ENCODE measurements at regions of chr3 and their contacts with region 1.

Region 1: DNA sequence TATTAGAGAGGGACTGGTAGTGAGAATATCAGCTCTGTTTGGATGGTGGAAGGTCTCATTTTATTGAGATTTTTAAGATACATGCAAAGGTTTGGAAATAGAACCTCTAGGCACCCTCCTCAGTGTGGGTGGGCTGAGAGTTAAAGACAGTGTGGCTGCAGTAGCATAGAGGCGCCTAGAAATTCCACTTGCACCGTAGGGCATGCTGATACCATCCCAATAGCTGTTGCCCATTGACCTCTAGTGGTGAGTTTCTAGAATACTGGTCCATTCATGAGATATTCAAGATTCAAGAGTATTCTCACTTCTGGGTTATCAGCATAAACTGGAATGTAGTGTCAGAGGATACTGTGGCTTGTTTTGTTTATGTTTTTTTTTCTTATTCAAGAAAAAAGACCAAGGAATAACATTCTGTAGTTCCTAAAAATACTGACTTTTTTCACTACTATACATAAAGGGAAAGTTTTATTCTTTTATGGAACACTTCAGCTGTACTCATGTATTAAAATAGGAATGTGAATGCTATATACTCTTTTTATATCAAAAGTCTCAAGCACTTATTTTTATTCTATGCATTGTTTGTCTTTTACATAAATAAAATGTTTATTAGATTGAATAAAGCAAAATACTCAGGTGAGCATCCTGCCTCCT is 87.2 kb downstream of the TGFBR2 start:
- DNase-seq: peak; percentile 48
- CTCF ChIP-seq: peak; percentile 57

Region 2: DNA sequence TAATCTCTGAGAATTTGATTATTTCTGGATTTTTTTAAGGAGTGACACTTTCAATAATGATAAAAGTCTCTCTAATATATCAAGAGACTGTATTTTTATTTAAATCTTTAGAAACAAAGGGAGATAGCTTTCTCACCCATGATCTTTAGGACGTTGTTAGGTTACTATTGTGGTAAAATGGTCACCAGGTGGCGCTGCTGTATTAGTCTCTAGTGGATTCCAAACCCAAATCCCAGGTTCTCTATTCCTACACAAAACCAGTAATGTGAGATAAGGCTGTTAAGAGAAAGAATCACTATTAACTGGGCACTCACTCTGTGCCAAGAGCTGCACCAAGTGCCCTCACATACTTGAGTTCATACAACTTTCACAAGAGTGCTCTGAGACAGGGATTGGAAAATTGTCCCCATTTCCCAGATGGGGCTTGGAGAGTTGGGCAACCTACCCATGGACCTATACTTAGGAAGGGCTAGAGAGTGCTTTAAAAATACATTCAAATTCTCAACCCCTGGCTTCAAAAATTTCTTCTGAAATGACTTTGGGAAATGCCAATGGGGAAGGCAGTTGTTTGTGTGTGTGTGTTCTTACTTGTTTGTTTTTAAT is 680.6 kb before region 1 on chr3:
- CTCF ChIA-PET with region 1: interaction called, 28 read pairs
- POLR2A ChIA-PET with region 1: no interaction called
- DNase-seq: peak; percentile 18
- CTCF ChIP-seq: peak; percentile 60

Region 3: GRCh38 chr3:30042274-30042859 is 651.2 kb before region 1 on chr3:
- CTCF ChIA-PET with region 1: interaction called, 40 read pairs
- POLR2A ChIA-PET with region 1: no interaction called
- DNase-seq: peak; percentile 24
- CTCF ChIP-seq: peak; percentile 48

Region 4: DNA sequence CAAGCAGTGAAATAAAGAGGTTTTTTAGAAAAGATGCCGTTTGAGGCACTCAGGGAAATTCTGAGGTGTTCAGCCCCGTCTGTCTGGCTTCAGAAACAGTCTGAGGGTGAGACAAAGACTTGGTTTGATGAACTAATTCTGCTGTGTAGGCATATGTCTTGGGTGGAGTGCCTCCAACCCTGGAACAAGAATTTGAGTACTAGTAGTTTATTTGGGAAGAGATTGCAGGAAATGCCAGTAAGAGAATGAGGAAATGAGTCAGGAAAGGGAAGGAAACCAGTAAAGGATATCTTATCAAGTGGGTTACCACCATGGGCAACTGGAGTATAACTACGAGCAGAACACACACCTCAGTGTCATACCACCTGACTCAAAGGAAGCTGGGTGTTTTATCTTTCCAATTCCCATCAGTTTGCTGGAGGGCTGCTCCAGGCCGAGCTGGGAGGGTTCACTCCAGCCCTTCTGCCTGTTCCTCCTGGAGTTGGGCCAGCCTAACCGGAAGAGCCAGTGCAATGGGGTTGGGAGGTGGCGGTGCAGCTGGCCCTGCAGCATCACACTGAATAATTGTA is 11.9 kb before region 1 on chr3:
- CTCF ChIA-PET with region 1: interaction called, 19 read pairs
- POLR2A ChIA-PET with region 1: no interaction called
- DNase-seq: no peak
- CTCF ChIP-seq: no peak

Region 5: DNA sequence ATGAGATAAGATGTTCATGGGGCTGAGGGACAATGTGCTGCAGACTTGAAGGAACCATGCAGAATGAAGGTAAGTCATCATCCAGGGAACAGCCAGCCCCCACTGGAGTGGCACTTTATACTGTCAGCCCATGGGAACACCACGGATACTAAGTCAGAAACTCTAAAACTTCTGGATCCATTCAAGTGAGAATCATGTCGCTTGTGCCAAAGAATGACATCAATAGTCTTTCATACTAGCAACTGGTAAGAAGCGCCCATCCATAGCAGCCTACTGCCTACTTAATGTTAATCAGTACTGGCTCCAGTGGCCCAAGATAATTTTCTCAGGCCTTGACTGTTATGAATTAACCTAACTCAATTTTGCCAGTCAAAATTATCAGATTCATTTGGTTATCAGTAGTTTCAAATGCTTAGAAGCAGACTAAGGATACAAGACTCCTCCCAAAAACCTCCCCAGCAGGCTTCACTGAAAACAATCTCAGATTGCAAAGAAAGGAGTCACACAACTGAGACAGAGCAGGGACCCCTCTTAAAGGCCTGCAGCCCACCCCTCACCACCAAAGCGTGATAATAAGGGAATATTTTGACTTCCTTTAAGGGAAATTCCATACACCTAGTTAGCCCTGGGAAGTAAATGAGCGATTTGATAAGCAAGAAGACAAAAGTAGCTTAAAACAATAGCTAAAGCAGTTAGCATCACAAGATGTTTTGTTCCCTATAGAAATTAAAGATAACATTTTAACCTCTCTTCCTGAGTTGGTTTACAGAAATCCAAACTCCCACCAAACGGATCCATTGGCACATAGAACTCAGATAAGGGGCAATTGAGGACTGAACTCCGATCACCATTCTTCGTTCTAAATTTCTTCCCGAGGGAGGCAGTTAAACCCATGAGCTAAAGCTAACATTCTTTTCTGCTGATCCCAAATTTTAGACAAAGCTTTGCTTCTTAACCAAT is 11.6 kb after region 1 on chr3:
- CTCF ChIA-PET with region 1: interaction called, 21 read pairs
- POLR2A ChIA-PET with region 1: no interaction called
- DNase-seq: no peak
- CTCF ChIP-seq: no peak

Region 6: GRCh38 chr3:30742796-30743619 is 49.4 kb after region 1 on chr3:
- CTCF ChIA-PET with region 1: no interaction called
- POLR2A ChIA-PET with region 1: no interaction called
- DNase-seq: no peak
- CTCF ChIP-seq: no peak

Region 7: DNA sequence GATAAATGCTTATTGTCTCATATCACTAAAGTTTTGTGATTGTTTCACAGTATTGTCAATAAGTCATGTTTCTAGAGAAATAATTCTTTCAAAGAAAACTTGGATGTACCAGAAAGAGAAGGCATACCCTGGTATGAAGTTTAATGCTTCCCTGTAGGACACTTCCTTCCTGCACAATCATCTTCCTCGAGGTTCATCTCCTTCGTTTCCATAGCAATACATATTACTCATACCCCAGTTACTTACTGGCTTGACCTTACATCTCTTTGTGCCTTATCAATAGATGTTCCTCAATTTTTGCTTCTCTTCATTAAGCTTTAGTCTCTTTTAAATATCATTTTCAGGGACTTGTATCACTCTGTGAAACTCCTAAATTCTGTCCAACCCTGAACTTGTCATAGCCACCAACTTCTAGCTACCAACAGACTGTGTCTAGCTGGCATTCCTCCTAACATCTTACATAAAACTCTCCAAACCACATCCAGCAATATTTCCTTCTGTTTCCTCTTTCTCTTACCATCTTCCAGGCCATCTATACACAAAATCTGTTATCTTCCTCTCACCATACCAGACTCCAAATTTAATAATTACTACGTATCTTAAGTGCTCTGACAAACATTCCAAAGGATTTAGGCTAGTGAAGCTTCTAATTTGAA is 66.6 kb after region 1 on chr3:
- CTCF ChIA-PET with region 1: no interaction called
- POLR2A ChIA-PET with region 1: no interaction called
- DNase-seq: no peak
- CTCF ChIP-seq: no peak

Region 8: GRCh38 chr3:31002730-31003129 is 309.1 kb after region 1 on chr3:
- CTCF ChIA-PET with region 1: no interaction called
- POLR2A ChIA-PET with region 1: no interaction called
- DNase-seq: no peak
- CTCF ChIP-seq: no peak

Measured in GM10248 (cell line).